ENCODE measurements at regions of chr17 and their contacts with region 1.

Region 1: GRCh38 chr17:7687908-7688807 is at the start of gene WRAP53:
- DNase-seq: peak; percentile 96 to 100 (median 98)

Region 2: GRCh38 chr17:7403977-7404736 is 284.0 kb before region 1 on chr17 and contains the start of gene TMEM256:
- intact Hi-C with region 1: loop called (anchors 5 kb)
- DNase-seq: peak; percentile 99 to 100 (median 100)

Region 3: DNA sequence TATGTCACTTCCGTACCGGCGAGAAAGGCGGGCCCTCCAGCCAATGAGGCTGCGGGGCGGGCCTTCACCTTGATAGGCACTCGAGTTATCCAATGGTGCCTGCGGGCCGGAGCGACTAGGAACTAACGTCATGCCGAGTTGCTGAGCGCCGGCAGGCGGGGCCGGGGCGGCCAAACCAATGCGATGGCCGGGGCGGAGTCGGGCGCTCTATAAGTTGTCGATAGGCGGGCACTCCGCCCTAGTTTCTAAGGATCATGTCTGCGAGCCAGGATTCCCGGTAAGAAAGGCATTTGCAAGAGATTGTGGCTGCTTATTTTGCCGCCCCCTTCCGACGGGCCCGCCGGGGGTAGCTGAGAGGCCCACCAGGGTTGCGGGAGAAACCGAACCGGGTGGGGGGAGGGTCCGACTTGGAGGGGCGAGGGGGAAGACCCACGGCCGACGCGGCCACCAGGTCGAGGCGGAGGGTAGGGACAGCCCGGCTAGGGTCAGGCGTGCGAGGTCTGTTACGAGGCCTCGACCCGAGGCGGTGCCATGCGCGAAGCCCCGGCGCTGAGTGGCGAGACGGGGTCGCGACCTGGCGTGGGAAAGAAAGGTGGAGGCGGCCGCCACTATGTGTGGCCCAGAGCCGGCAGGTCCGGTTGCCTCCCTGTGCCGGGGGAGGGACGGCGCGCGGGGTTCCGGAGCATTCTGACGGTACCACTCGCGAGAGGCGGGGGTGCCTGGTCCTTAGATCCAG is 115.4 kb before region 1 on chr17:
- intact Hi-C with region 1: loop called (anchors 5 kb)
- DNase-seq: peak in 9 of 10 donors; percentile 99 to 100 (median 100)

Region 4: GRCh38 chr17:7614422-7615264 is 73.5 kb before region 1 on chr17 and contains the start of gene FXR2:
- intact Hi-C with region 1: loop called (anchors 2 kb)
- DNase-seq: peak; percentile 99 to 100 (median 100)

Region 5: GRCh38 chr17:7634384-7634783 is 53.8 kb before region 1 on chr17:
- intact Hi-C with region 1: loop called (anchors 2 kb)
- DNase-seq: peak in 5 of 10 donors; percentile 43 to 90 (median 50)

Region 6: GRCh38 chr17:7650509-7651096 is 37.6 kb before region 1 on chr17 and contains the start of gene ATP1B2:
- intact Hi-C with region 1: no loop called
- DNase-seq: peak; percentile 42 to 96 (median 74)

Region 7: GRCh38 chr17:7887482-7888183 is 199.5 kb after region 1 on chr17:
- intact Hi-C with region 1: no loop called
- DNase-seq: peak; percentile 75 to 99 (median 90)